Activated CD4-positive, alpha-beta T cell treated with anti-CD3 and anti-CD28 coated beads, Interleukin-2, amount 10 ng/mL, durations not matched to agents 24 days and 14 days (primary cell): ENCODE measurements at regions of chr3 and their contacts with region 1.

Region 1: DNA sequence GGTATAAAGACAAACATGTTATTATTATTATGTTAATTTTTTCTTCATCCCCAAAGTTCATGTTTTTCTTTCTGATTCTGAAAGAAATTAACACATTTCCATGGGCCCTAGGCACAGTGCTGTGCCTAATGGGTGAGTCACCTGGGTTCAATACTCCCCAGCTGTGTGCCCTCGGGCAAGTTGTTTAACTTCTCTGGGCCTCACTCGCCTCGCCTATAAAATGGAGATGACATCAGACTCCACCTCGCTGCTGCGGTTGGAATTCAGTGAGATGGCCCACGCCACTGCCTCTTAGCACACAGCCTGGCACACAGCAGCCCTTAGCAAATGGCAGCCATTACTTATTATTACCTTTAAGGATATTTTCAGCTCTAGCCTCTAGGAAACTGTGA is 22.6 kb downstream of the DNASE1L3 start:
- DNase-seq: no peak
- H3K4me3 Mint-ChIP-seq: no peak overlapping the region
- H3K27ac Mint-ChIP-seq: no peak overlapping the region
- H3K4me1 Mint-ChIP-seq: no peaks in the 10 kb centered on the region
- H3K27me3 Mint-ChIP-seq: peaks cover 2% of the 10 kb centered on the region

Region 2: DNA sequence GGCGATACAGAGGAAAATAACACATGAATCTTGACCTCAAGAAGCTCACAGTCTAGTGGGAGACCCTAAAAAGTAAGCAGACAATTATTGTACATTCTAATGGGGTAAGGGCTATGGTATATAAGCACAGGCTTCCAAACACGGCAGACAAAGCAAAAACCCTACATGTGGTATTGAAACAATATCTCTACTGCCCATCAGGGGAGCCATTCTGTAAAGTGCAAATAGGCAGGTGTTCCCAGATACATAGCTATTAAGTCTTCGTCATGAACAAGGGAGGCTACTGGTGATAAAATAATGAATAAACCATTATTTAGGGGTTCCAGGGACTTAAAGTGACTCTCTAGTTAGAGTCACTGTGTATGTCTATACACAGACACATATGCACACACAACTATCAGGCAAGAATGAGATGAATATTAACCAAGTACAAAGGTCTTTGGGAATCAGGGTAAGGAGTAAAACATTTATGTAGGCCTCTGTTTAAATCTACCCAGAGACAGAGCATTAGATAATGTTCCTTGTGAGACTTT is 857.0 kb before region 1 on chr3:
- intact Hi-C with region 1: no loop called
- DNase-seq: no peak
- H3K4me3 Mint-ChIP-seq: no peak overlapping the region
- H3K27ac Mint-ChIP-seq: no peak overlapping the region
- H3K4me1 Mint-ChIP-seq: no peaks in the 10 kb centered on the region
- H3K27me3 Mint-ChIP-seq: peaks cover 11% of the 10 kb centered on the region

Region 3: DNA sequence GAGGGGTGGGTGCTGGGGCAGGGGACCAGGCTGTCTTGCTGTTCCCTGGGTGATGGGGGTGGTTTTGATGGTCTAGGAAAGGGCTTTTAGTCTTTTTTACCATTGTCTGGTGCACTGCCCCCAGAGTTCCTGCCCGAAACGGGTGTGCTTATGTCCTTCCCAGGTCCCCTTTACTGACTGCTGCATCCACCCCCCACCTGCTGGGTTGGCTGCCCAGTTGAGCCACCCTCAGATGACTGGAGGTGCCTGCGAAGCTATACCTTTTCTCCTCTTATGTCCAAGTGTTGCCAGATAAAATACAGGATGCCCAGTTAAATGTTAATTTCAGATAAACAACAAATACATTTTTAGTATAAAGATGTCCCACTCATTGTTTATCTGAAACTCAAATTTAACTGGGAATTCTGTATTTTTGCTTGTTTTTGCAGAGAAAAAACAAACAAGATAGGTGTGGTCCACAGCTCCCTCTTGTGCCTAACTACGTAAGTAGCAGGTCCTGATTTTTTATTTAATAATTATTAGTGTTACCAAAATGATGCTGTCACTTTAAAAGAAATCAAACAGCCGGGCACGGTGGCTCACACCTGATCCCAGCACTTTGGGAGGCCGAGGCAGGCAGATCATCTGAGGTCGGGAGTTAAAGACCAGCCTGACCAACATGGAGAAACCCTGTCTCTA is 111.8 kb after region 1 on chr3:
- intact Hi-C with region 1: loop called (anchors 1 kb)
- DNase-seq: no peak
- H3K4me3 Mint-ChIP-seq: no peak overlapping the region
- H3K27ac Mint-ChIP-seq: no peak overlapping the region
- H3K4me1 Mint-ChIP-seq: no peaks in the 10 kb centered on the region
- H3K27me3 Mint-ChIP-seq: peaks cover 18% of the 10 kb centered on the region

Region 4: GRCh38 chr3:58414538-58415197 is 226.5 kb after region 1 on chr3:
- intact Hi-C with region 1: loop called (anchors 5 kb)
- DNase-seq: peak; percentile 89
- H3K4me3 Mint-ChIP-seq: no peak overlapping the region
- H3K27ac Mint-ChIP-seq: no peak overlapping the region
- H3K4me1 Mint-ChIP-seq: peaks cover 5% of the 10 kb centered on the region
- H3K27me3 Mint-ChIP-seq: no peaks in the 10 kb centered on the region